ENCODE measurements at regions of chr7 and their contacts with region 1.

Region 1: GRCh38 chr7:99312316-99313203 is 13.1 kb upstream of the ARPC1A start:
- DNase-seq: peak; percentile 85
- H3K4me3 ChIP-seq: no peak overlapping the region
- H3K27ac ChIP-seq: no peak overlapping the region
- H3K4me1 ChIP-seq: peaks cover 7% of the 10 kb centered on the region
- H3K27me3 ChIP-seq: no peaks in the 10 kb centered on the region
- CTCF ChIP-seq: peak; percentile 86 to 91 (median 87)
- POLR2A ChIP-seq: no peak

Region 2: GRCh38 chr7:99040104-99040958 is 272.2 kb before region 1 on chr7:
- intact Hi-C with region 1: loop called (anchors 10 kb)
- DNase-seq: peak; percentile 90
- H3K4me3 ChIP-seq: no peak overlapping the region
- H3K27ac ChIP-seq: peak overlapping the region; percentile 15 to 90
- H3K4me1 ChIP-seq: peaks cover 31% of the 10 kb centered on the region
- H3K27me3 ChIP-seq: no peaks in the 10 kb centered on the region
- CTCF ChIP-seq: peak; percentile 79 to 87 (median 83)
- POLR2A ChIP-seq: no peak

Measured in testis (tissue), 5 donors.